ENCODE measurements at regions of chr7 and their contacts with region 1.

Region 1: DNA sequence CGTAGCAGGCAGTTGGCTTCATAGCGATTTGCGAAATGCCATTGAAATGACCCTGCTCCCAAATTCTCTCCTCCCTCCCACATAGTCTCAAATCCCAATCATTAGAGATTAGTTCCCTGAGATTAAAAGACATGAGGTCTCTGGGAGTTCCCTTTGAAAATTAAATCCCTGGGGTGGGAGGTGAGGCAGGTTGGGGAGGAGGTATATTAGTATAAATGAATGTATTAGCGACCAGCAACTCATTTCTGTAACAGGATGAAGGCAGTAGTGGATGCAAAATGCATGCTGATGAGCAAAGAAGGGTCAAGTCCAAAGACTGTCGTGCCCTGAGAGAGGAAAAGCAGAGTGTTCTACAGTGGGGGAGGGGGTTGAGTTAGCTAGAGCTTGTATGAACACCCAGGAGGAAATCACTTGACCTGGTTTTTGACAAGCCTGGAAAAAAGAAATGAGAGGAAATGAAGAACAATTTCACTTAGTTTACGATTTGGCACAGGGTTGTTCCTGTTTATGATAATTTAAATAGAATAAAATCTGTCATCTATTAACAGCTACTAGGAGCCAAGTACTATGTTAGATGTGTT is 79.6 kb upstream of the MTPN start:
- DNase-seq: no peak
- H3K4me3 ChIP-seq: no peak overlapping the region
- CTCF ChIP-seq: no peak
- POLR2A ChIP-seq: no peak

Region 2: GRCh38 chr7:136275794-136276193 is 219.1 kb after region 1 on chr7:
- intact Hi-C with region 1: no loop called
- DNase-seq: no peak
- H3K4me3 ChIP-seq: no peak overlapping the region
- CTCF ChIP-seq: no peak
- POLR2A ChIP-seq: no peak

Region 3: DNA sequence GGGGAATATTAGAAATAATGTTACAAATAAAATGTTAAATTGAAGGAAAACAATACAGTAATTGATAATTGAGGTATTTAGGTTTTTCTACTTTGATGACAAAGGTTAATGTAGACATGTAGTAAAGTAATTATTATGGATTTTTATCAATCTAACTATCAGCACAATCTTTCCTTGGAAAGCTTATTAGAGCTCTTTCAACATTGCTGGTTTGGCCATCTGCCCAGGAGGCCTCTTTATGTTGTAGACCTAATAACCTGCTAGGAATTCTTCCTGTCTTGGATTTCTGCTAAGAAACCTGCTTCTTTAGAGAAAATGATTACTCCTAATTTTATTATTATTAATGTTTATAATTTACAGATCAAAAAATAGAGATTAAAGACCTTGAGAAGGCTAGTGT is 890.6 kb after region 1 on chr7:
- intact Hi-C with region 1: no loop called
- DNase-seq: no peak
- H3K4me3 ChIP-seq: no peak overlapping the region
- CTCF ChIP-seq: no peak
- POLR2A ChIP-seq: no peak

Region 4: GRCh38 chr7:137772748-137773147 is 1716.0 kb after region 1 on chr7:
- intact Hi-C with region 1: loop called (anchors 10 kb)
- DNase-seq: no peak
- H3K4me3 ChIP-seq: no peak overlapping the region
- CTCF ChIP-seq: no peak
- POLR2A ChIP-seq: no peak

Measured in lower leg skin (tissue), 4 donors.